Stomach (tissue), 19 donors: ENCODE measurements at regions of chr18 and their contacts with region 1.

Region 1: GRCh38 chr18:13216092-13216582 is 2.4 kb upstream of the LDLRAD4 start:
- DNase-seq: peak; percentile 81 to 90
- H3K4me3 ChIP-seq: peak overlapping the region in 2 of 4 donors; percentile 61 to 80
- H3K27ac ChIP-seq: peak overlapping the region in 3 of 5 donors; percentile 9 to 87 (median 85)
- H3K4me1 ChIP-seq: peaks cover 21 to 48% (median 48%) of the 10 kb centered on the region in 4 donors
- H3K27me3 ChIP-seq: peaks cover 0 to 41% (median 11%) of the 10 kb centered on the region in 3 donors
- CTCF ChIP-seq: peak in 5 of 7 experiments; percentile 26 to 75 (median 61)
- EP300 ChIP-seq: no peak
- POLR2A ChIP-seq: no peak

Region 2: DNA sequence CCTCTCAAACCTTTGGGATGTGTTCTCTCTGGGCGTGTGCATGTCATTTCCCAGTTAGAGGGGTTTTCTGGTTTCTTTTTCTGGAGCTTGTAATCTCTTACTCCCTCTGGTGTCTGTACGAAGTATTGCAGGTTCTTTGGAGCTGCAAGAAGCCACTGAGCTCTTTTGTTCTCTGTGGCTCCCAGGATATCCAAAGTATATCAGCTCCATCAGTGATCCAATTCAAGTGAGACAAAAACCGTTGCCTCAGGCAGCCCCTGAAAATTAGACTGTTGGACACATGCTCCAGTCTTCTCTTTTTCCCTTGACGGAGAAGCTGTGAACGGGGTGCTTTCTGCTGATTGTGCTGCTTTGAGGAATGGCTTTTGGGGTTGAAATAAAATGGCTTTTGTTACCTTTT is 56.6 kb before region 1 on chr18:
- intact Hi-C with region 1: no loop called
- DNase-seq: peak in 1 of 2 donors; percentile 71
- H3K4me3 ChIP-seq: no peak overlapping the region
- H3K27ac ChIP-seq: no peak overlapping the region
- H3K4me1 ChIP-seq: no peaks in the 10 kb centered on the region
- H3K27me3 ChIP-seq: peaks cover 0 to 6% (median 0%) of the 10 kb centered on the region in 3 donors
- CTCF ChIP-seq: peak in 5 of 7 experiments; percentile 47 to 85 (median 68)
- EP300 ChIP-seq: no peak
- POLR2A ChIP-seq: no peak

Region 3: GRCh38 chr18:13381944-13382365 is 165.8 kb after region 1 on chr18:
- intact Hi-C with region 1: loop called (anchors 10 kb)
- DNase-seq: peak; percentile 60 to 91
- H3K4me3 ChIP-seq: peak overlapping the region; percentile 29 to 38 (median 35)
- H3K27ac ChIP-seq: peak overlapping the region; percentile 46 to 82 (median 79)
- H3K4me1 ChIP-seq: peaks cover 10 to 51% (median 30%) of the 10 kb centered on the region in 4 donors
- H3K27me3 ChIP-seq: no peaks in the 10 kb centered on the region
- CTCF ChIP-seq: no peak
- EP300 ChIP-seq: no peak
- POLR2A ChIP-seq: no peak

Region 4: DNA sequence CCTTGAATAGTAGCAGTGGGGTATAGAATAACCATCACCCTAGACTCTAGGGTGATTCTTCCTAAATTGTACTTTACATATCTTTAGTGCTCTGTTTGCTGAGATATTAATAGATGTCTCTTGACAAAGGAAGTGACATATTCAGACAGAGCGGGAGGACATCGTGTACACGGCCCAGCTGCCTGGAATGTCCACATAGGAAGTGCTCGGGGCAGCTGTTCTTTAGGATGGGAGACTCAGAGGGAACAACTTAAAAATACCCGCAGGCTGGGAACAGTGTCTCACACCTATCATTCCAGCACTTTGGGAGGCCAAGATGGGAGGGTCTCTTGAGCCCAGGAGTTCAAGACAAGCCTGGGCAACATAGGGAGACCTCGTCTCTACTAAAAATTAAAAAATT is 304.2 kb after region 1 on chr18:
- intact Hi-C with region 1: loop called (anchors 10 kb)
- DNase-seq: no peak
- H3K4me3 ChIP-seq: no peak overlapping the region
- H3K27ac ChIP-seq: peak overlapping the region in 4 of 5 donors; percentile 10 to 66 (median 26)
- H3K4me1 ChIP-seq: no peaks in the 10 kb centered on the region
- H3K27me3 ChIP-seq: no peaks in the 10 kb centered on the region
- CTCF ChIP-seq: no peak
- EP300 ChIP-seq: no peak
- POLR2A ChIP-seq: no peak